Right ventricle myocardium inferior (tissue), 1 donor: ENCODE measurements at regions of chr6 and their contacts with region 1.

Region 1: DNA sequence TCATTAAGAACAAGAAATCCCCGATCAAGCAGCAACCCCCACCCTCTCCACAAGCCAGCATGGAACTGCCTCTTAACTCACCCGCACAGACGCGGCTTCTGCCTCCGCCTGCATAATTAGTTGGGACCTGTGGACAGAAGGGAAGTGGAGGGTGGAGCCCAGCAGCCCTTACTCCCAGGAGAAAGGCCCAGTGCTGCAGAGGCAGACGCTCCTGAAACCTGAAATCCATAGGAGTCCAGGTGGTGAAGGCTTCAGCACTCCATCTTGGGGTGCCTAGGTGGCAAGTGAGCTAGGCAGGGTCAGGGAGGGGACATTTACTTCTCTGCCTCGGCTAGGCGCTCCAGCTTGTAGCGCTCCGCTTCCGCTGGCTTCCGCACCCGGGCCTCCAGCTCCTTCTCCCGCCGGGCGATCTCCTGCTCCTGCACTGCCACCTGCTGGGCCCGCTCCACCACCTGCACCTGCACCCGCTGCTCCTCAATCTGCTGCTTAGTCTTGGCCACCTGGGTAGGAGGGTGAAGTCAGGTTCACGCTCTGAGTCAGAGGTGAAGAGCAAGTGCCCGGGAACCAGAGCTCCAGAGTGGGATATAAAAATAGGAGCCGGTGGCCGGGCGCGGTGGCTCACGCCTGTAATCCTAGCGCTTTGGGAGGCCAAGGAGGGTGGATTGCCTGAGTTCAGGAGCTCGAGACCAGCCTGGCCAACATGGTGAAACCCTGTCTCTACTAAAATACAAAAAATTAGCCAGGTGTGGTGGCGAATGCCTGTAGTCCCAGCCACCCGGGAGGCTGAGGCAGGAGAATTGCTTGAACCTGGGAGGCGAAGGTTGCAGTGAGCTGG is 10.7 kb downstream of the TUBB start:
- DNase-seq: peak; percentile 80
- ATAC-seq: peak; percentile 64

Region 2: GRCh38 chr6:30515932-30516753 is 214.7 kb before region 1 on chr6:
- intact Hi-C with region 1: no loop called
- DNase-seq: peak; percentile 94
- ATAC-seq: peak; percentile 97

Region 3: DNA sequence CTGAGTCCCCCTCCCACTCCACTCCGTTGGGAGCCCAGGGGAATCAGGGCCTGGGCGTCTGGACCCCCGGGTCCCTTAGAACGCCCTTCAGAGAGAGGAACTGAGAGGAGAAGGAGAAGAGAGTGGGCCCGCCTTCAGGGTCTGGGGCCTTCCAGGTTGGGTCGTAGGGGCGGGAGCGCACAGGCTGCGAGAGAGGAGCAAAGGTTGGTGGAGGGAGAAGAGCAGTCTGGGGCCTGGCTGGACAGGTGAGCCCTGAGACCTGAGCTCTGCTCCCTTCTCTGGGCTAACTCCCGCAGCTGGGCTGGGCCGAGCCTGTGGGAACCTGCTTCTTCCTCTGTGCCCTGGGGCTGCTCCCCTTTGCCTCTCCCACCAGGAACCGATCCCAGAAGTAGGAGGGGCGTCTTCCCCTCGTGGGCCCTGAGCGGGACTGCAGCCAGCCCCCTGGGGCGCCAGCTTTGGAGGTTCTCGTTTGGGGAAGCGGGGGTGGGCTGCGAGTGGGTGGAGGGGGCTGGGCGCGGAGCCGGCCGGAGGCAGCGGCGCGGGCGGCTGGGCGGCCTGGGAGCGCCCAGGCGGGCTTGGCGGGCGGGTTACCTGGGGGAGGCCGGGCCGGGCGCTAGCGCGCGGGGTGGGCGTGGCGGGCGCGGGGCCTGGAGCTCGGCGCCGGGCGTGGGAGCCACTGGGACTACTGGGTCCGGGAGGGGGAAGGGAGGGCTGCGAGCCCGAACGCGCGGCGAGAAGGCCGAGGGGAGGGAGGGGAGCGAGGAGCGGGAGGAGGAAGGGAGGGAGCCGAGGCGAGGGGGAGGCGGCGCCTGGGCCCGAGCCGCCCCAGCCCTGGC is 153.1 kb after region 1 on chr6 and contains the start of gene DDR1:
- intact Hi-C with region 1: loop called (anchors 5 kb)
- DNase-seq: peak; percentile 83
- ATAC-seq: peak; percentile 83
- total RNA-seq, gene DDR1: 32.5 TPM